Activated B cell treated with CpG ODN at 0.5 μM for 24 hours (primary cell): ENCODE measurements at regions of chr18 and their contacts with region 1.

Region 1: GRCh38 chr18:49813319-49814146 is at the start of gene ACAA2:
- DNase-seq: peak; percentile 79
- ATAC-seq: peak; percentile 88
- H3K4me3 Mint-ChIP-seq: peak within 1 kb of the TSS; percentile 96
- H3K27ac Mint-ChIP-seq: peak within 1 kb of the TSS; percentile 95
- H3K4me1 Mint-ChIP-seq: peaks cover 24% of the 10 kb centered on the region
- H3K27me3 Mint-ChIP-seq: no peaks in the 10 kb centered on the region
- CTCF ChIP-seq: no peak
- total RNA-seq, gene ACAA2: 24.9 and 26.9 TPM in 2 replicates

Region 2: DNA sequence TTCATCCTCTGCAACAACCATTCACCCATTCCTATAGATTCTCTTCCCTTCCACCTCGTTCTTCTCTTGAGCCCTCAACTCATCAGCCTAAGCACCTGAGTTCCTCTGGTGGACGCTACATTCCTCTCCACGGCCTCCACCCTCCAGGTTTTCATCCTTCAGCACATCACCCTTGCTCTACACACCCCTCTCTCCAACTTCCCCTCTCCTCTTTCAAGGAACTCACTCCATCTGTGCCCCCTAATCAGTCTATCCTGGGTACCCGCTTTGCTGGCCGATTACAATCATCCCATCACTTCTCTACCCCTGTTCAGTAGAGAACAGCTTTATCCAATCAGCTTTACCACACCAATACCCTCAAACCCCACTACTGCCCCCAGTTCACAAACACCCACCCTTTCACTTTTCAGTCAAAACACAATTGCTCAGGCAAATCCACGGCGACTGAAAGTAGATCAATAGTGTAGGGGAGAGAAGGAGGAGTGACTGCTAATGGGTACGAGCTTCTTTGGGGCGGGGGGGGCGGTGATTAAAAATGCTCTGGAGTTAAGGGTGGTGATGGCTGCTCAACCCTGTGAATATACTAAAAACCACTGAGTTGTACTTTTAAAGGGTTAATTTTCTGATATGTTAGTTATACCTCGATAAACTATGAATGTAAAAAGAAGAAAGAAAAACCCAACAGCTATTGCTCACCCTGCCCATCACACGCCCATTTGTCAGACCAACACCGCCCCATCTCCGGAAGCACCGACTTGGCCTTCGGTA is 353.9 kb before region 1 on chr18:
- CTCF ChIA-PET with region 1: no interaction called
- POLR2A ChIA-PET with region 1: interaction called, 3 read pairs
- intact Hi-C with region 1: loop called (anchors 2 kb)
- DNase-seq: no peak
- ATAC-seq: peak; percentile 23
- H3K4me3 Mint-ChIP-seq: peak overlapping the region; percentile 88
- H3K27ac Mint-ChIP-seq: peak overlapping the region; percentile 77
- H3K4me1 Mint-ChIP-seq: peaks cover 45% of the 10 kb centered on the region
- H3K27me3 Mint-ChIP-seq: no peaks in the 10 kb centered on the region
- CTCF ChIP-seq: no peak

Region 3: GRCh38 chr18:50374753-50375391 is 561.3 kb after region 1 on chr18 and contains the start of gene SKA1:
- CTCF ChIA-PET with region 1: no interaction called
- POLR2A ChIA-PET with region 1: no interaction called
- intact Hi-C with region 1: loop called (anchors 2 kb)
- DNase-seq: peak; percentile 85
- ATAC-seq: peak; percentile 100
- H3K4me3 Mint-ChIP-seq: peak within 1 kb of the TSS; percentile 83
- H3K27ac Mint-ChIP-seq: peak within 1 kb of the TSS; percentile 84
- H3K4me1 Mint-ChIP-seq: peaks cover 14% of the 10 kb centered on the region
- H3K27me3 Mint-ChIP-seq: peaks cover 6% of the 10 kb centered on the region
- CTCF ChIP-seq: no peak
- total RNA-seq, gene SKA1: 0.71 and 1.0 TPM in 2 replicates